ENCODE measurements at regions of chr12 and their contacts with region 1.

Region 1: DNA sequence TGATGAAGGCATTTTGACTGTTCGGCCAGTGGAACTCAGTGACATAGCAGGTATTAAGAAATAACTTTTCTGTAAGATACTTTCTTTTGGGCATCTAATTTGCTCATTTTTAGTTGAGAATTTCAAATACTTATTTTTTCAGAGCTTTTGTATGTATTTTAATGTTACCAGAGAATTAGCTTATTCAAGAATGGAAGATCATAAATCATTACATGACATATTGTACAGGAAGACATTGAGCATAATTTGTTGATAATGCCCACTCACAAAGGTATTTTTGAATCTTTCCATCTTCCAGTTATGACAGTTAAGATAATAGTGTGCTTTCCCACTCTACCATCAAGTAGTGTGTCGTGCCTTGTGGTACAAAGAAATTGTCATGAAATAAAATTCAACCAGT is 36.5 kb downstream of the TMEM117 start:
- DNase-seq: no peak
- CTCF ChIP-seq: no peak

Region 2: DNA sequence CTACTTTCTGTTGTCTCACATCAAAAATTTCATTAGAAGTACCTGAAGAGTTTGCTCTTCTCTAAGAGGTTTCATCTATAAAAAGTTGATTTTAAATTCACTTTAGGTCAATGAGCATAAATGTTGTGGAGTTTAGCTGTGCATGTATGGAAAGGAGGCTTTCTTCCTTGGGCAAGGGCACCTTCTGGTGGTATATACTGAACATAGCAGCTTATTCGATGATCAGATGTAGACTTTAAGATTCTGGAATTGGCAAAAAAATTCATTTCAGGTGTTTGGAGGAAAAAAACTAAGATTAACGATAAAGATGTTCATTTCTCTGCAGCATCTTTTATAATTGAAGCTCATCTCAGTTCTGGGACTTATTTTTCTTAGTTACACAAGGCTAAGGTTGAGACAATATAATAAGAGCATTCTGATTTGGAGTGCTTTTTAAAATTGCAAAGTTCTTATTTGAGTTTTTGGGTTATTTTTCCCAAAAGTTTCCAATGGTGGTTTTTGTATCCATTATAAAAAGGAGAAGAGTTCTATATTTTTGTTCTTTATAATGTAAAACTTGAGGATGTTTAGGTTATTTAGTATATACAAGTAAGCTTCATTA is 10.3 kb after region 1 on chr12:
- CTCF ChIA-PET with region 1: interaction called, 11 read pairs
- POLR2A ChIA-PET with region 1: no interaction called
- DNase-seq: peak; percentile 55
- CTCF ChIP-seq: peak; percentile 64

Region 3: DNA sequence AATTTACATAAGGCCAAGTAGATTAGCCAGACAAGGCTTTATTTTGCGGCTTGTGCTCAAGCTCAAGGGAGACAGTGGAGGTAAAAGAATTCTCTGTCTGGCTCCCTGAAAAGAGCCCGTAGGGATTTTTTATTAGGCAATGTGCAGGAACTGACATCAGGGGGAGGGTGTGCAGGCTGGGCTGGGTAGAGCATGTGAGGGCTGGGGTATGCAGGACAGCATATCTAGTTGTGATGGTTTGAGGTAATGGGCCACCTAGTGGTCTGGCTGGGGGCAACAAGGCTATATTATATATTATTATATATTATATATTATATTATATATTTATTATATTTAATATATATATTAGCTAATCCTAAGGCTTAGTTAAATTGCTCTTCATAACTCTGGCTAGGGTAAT is 65.6 kb after region 1 on chr12:
- CTCF ChIA-PET with region 1: no interaction called
- POLR2A ChIA-PET with region 1: no interaction called
- DNase-seq: no peak
- CTCF ChIP-seq: no peak

Measured in GM10248 (cell line).